Cardiac septum (tissue), 1 donor: ENCODE measurements at regions of chr20 and their contacts with region 1.

Region 1: DNA sequence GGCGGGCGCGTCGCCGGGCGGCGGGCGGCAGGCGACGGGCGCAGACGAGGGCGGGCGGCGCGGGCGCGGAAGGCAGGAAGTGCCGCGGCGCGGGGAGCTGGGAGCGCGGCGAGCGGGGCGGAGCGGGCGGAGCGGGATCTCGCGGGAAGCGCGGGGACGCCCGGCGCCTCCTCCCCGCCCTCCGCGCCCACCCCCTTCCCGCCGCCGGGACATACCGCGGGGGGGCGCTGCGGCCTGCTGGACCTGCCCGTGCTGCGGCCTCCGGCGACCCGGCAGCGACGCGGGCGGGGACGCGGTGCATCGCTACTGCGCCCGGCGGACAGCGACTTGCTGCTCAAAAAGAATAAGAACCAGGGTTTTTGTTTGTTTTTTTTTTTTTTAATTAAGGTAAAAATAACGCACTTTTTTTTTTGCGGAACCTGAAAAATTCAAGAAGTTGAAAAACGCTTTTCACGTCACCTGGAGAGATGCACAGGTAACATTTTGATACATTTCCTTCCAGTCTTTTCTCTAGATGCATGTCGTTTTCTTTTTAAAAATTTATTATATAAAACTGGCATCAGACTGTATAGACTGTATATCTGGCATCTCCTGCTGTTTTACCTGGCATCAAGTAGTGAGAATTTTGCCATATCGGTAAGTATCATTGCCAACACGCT is at the start of gene CENPB:
- DNase-seq: peak; percentile 94
- total RNA-seq, gene CENPB: 79.8 TPM

Region 2: GRCh38 chr20:3818155-3819151 is 31.7 kb after region 1 on chr20:
- intact Hi-C with region 1: loop called (anchors 1 kb)
- DNase-seq: no peak

Region 3: GRCh38 chr20:4076671-4077070 is 289.9 kb after region 1 on chr20:
- intact Hi-C with region 1: loop called (anchors 10 kb)
- DNase-seq: no peak